ENCODE measurements at regions of chr1 and their contacts with region 1.

Region 1: DNA sequence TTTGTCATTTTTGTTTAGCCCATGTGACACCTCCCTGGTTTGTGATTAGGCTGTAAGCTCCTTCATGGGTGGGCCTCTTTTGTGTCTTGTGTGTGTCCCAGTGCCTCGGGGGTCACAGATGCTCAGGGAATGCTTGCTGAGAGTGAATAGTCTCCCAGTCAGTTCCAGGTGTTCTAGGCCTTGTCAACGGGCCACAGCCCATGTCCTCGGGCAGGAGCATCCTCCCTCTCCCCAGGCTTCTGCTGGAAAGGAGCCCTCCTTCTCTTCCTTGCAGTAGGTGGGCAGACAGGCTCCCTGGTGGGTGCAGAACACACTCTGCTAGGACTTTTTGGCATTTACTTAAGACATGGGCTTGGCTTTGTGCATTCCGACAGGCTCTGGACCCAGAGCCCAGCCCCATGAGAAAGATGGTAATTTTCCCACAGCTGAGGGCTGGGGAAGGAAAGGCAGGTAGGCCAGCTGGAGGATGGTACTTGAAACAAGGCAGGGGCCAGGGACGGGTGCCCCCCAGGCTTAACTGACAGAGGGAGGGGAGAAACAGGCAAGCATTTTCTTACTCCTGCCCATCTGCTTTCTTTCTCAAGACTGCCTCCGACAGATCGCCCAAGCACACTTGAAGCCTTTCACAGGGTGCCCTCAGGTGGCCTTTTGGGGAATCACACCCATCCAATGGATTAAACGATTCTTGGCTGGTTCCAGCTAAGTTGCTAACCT is 7.1 kb upstream of the CPLANE2 start:
- DNase-seq: peak; percentile 90
- H3K4me3 ChIP-seq: no peak overlapping the region
- H3K27ac ChIP-seq: no peak overlapping the region
- H3K4me1 ChIP-seq: peaks cover 14% of the 10 kb centered on the region
- H3K27me3 ChIP-seq: no peaks in the 10 kb centered on the region
- CTCF ChIP-seq: peak; percentile 93

Region 2: GRCh38 chr1:16199157-16199501 is 45.0 kb before region 1 on chr1:
- intact Hi-C with region 1: loop called (anchors 5 kb)
- DNase-seq: no peak
- H3K4me3 ChIP-seq: no peak overlapping the region
- H3K27ac ChIP-seq: no peak overlapping the region
- H3K4me1 ChIP-seq: no peaks in the 10 kb centered on the region
- H3K27me3 ChIP-seq: no peaks in the 10 kb centered on the region
- CTCF ChIP-seq: no peak